ENCODE measurements at regions of chr1 and their contacts with region 1.

Region 1: GRCh38 chr1:155001675-155002463 is 733 bp upstream of the ZBTB7B start:
- DNase-seq: peak; percentile 99
- H3K4me3 ChIP-seq: peak overlapping the region; percentile 85
- H3K27ac ChIP-seq: peak overlapping the region; percentile 94
- H3K4me1 ChIP-seq: peaks cover 20% of the 10 kb centered on the region
- H3K27me3 ChIP-seq: no peaks in the 10 kb centered on the region
- CTCF ChIP-seq: peak; percentile 49; the same call in 1 of the 2 replicates

Region 2: DNA sequence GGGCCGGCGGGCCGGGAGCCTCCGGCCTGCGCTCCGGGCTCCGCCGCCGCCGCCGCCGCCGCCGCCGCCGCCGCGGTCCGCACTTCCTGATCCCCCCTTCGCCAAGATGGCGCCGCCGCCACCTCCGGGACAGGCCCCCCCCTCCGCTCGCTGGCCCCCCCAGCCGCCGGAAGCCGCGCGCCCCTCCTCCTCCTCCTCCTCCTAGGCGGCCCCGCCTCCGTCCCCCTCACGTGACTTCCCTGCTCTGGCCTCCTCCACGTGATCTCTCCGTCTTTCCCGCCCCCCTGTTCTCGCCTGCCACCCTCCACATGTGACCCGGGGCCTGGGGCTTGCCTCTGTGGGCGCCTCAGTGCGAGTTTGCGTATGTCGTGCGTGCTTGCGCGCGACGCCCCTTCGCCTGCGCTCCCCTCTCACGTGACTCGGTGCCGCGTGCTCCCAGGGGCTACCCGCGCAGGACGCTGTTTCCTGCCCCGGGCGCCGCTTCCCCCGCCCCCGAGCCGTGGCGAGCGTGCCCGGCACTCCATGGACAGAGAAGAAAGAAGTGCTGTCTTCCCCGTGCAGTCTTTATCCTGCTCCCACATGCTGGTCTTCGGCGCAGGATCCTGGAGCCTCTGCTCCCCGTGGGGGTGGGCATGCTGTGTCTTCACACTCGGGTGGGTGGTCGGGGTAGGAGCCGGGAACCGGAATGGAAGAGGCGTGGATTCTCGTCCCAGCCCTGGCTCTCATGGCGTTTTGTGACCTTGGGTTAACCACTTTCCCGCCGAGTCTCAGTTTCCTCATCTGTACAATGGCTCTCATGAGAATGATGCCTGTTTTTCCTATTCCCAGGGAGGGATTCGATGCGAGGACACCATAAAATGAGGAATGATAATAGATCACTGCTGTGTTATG is 443.0 kb before region 1 on chr1 and contains the start of gene UBE2Q1:
- CTCF ChIA-PET with region 1: interaction called, 5 read pairs
- POLR2A ChIA-PET with region 1: no interaction called
- intact Hi-C with region 1: loop called (anchors 5 kb)
- DNase-seq: peak; percentile 100
- H3K4me3 ChIP-seq: peak within 1 kb of the TSS; percentile 96
- H3K27ac ChIP-seq: peak within 1 kb of the TSS; percentile 85
- H3K4me1 ChIP-seq: peaks cover 18% of the 10 kb centered on the region
- H3K27me3 ChIP-seq: no peaks in the 10 kb centered on the region
- CTCF ChIP-seq: no peak
- total RNA-seq, gene UBE2Q1: 84.5 and 104 TPM in 2 replicates

Region 3: GRCh38 chr1:154598871-154599635 is 402.8 kb before region 1 on chr1:
- CTCF ChIA-PET with region 1: no interaction called
- POLR2A ChIA-PET with region 1: no interaction called
- intact Hi-C with region 1: no loop called
- DNase-seq: no peak
- H3K4me3 ChIP-seq: no peak overlapping the region
- H3K27ac ChIP-seq: peak overlapping the region; percentile 5
- H3K4me1 ChIP-seq: no peaks in the 10 kb centered on the region
- H3K27me3 ChIP-seq: no peaks in the 10 kb centered on the region
- CTCF ChIP-seq: no peak

Region 4: GRCh38 chr1:154847891-154848290 is 154.0 kb before region 1 on chr1:
- CTCF ChIA-PET with region 1: no interaction called
- POLR2A ChIA-PET with region 1: no interaction called
- intact Hi-C with region 1: no loop called
- DNase-seq: peak; percentile 80
- H3K4me3 ChIP-seq: no peak overlapping the region
- H3K27ac ChIP-seq: no peak overlapping the region
- H3K4me1 ChIP-seq: peaks cover 56% of the 10 kb centered on the region
- H3K27me3 ChIP-seq: no peaks in the 10 kb centered on the region
- CTCF ChIP-seq: no peak

Region 5: DNA sequence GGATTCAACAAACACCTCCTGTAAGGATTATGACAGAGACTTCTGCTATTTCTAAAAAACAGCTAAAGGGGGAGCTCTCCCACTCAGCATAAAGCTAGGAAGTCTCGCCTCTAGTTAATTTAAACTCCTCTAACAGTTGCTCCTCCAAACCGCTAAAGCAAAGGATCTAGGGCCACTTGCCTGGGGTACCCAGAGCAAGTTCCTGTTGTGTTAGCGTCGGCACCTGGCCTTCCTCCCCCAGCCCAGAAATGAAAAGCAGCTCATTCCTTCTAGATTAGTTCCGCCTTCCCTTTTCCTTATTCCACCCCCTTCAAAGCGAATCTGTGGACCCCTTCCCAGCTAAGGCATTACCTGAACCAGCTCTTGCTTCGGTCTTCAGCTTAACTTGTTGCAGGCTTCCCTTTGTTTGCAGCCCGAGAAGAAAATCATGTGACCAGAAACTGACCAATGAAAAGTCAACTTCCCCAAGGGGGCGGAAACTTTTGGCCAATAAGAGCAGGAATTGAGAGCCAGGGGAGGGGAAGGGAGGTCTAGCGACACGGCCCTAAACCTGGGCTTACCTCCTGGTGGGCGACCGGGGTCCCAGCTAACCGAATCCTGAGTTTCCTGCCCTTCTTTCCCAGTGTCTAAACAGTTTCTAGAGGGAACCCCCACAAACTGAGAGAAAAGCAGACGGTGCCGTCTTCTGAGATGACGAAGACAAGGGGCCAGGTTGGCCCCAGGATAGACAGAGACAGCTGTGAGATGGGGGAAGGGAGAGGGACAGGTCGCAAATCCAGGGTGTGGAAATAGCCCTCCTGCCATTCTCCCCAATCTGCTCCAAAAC is 45.9 kb before region 1 on chr1 and contains the start of gene PBXIP1:
- CTCF ChIA-PET with region 1: interaction called, 17 read pairs
- POLR2A ChIA-PET with region 1: no interaction called
- intact Hi-C with region 1: loop called (anchors 5 kb)
- DNase-seq: peak; percentile 96
- H3K4me3 ChIP-seq: peak within 1 kb of the TSS; percentile 51
- H3K27ac ChIP-seq: peak within 1 kb of the TSS; percentile 77
- H3K4me1 ChIP-seq: peaks cover 19% of the 10 kb centered on the region
- H3K27me3 ChIP-seq: no peaks in the 10 kb centered on the region
- CTCF ChIP-seq: peak; percentile 54
- total RNA-seq, gene PBXIP1: 12.7 and 20.8 TPM in 2 replicates

Region 6: GRCh38 chr1:155017041-155017945 is 15.4 kb after region 1 on chr1:
- CTCF ChIA-PET with region 1: interaction called, 16 read pairs
- POLR2A ChIA-PET with region 1: interaction called, 5 read pairs
- intact Hi-C with region 1: no loop called
- DNase-seq: peak; percentile 91
- H3K4me3 ChIP-seq: peak overlapping the region; percentile 49
- H3K27ac ChIP-seq: peak overlapping the region; percentile 81
- H3K4me1 ChIP-seq: peaks cover 18% of the 10 kb centered on the region
- H3K27me3 ChIP-seq: no peaks in the 10 kb centered on the region
- CTCF ChIP-seq: peak; percentile 100

Region 7: GRCh38 chr1:155084722-155085503 is 83.0 kb after region 1 on chr1:
- CTCF ChIA-PET with region 1: no interaction called
- POLR2A ChIA-PET with region 1: no interaction called
- intact Hi-C with region 1: loop called (anchors 5 kb)
- DNase-seq: peak; percentile 99
- H3K4me3 ChIP-seq: peak overlapping the region; percentile 69
- H3K27ac ChIP-seq: peak overlapping the region; percentile 66
- H3K4me1 ChIP-seq: peaks cover 42% of the 10 kb centered on the region
- H3K27me3 ChIP-seq: peaks cover 22% of the 10 kb centered on the region
- CTCF ChIP-seq: peak; percentile 95

Measured in A673 (cell line).